ENCODE measurements at regions of chr9 and their contacts with region 1.

Region 1: GRCh38 chr9:117782931-117783788 is 79.0 kb downstream of the TLR4 start:
- DNase-seq: peak; percentile 73
- ATAC-seq: peak; percentile 85
- H3K4me3 Mint-ChIP-seq: no peak overlapping the region
- H3K27ac Mint-ChIP-seq: no peak overlapping the region
- H3K4me1 Mint-ChIP-seq: peaks cover 2% of the 10 kb centered on the region
- H3K27me3 Mint-ChIP-seq: peaks cover 4% of the 10 kb centered on the region

Region 2: GRCh38 chr9:117682955-117683710 is 100.0 kb before region 1 on chr9:
- CTCF ChIA-PET with region 1: no interaction called
- POLR2A ChIA-PET with region 1: no interaction called
- intact Hi-C with region 1: loop called in 1 of 2 experiments (anchors 2 kb)
- DNase-seq: no peak
- ATAC-seq: peak; percentile 78
- H3K4me3 Mint-ChIP-seq: no peak overlapping the region
- H3K27ac Mint-ChIP-seq: no peak overlapping the region
- H3K4me1 Mint-ChIP-seq: peaks cover 5% of the 10 kb centered on the region
- H3K27me3 Mint-ChIP-seq: peaks cover 14% of the 10 kb centered on the region